ENCODE measurements at regions of chr5 and their contacts with region 1.

Region 1: DNA sequence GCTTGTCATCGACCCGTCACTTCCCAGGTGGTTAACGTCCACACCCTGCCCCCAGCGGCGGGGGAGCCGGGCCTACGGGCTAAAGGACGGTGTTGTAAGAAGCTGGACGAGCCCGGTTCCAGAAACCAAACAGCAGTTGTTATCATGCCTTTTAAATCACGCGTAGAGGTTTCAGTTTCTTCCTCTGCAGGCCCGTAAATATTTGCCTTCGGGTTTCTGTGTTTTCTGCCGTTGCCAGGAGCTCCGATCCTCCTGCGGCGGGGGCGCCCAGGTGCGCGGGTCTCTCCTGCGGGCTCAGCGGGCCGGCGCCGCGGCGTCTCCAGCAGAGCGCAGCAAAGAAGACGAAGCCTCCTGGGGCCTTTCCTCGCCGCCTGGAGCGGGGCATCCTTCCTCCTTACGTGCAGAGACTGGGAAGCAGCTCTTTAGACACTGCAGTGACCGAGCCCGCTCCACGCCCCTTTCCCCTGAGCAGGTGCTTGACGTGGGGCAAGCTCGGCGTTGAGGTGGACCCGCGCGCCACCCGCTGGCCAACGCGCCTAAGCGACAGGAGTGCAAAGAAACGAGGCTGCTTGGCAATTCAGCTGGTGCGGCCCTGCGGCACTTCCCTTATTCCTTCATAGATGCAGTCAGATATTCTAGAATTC is 21.8 kb upstream of the TTC1 start:
- DNase-seq: peak; percentile 57
- ATAC-seq: peak; percentile 98
- H3K4me3 ChIP-seq: peak overlapping the region; percentile 41 to 56
- H3K27ac ChIP-seq: no peak overlapping the region
- H3K4me1 ChIP-seq: peaks cover 0 to 19% of the 10 kb centered on the region in 2 experiments; a peak in 2 of 4 replicates
- H3K27me3 ChIP-seq: peaks cover 14% of the 10 kb centered on the region; the same call in 1 of the 2 replicates
- CTCF ChIP-seq: peak; percentile 85 to 87 (median 85)
- POLR2A ChIP-seq: no peak
- RAD21 ChIP-seq: peak; percentile 98

Region 2: GRCh38 chr5:158695595-158696330 is 1291.4 kb before region 1 on chr5:
- CTCF ChIA-PET with region 1: no interaction called
- POLR2A ChIA-PET with region 1: no interaction called
- RAD21 ChIA-PET with region 1: no interaction called
- intact Hi-C with region 1: loop called (anchors 5 kb)
- DNase-seq: peak; percentile 45
- ATAC-seq: peak; percentile 95
- H3K4me3 ChIP-seq: no peak overlapping the region
- H3K27ac ChIP-seq: no peak overlapping the region
- H3K4me1 ChIP-seq: no peaks in the 10 kb centered on the region
- H3K27me3 ChIP-seq: peaks cover 41% of the 10 kb centered on the region; the same call in 1 of the 2 replicates
- CTCF ChIP-seq: peak; percentile 62 to 97 (median 94)
- POLR2A ChIP-seq: no peak
- RAD21 ChIP-seq: peak; percentile 85

Region 3: DNA sequence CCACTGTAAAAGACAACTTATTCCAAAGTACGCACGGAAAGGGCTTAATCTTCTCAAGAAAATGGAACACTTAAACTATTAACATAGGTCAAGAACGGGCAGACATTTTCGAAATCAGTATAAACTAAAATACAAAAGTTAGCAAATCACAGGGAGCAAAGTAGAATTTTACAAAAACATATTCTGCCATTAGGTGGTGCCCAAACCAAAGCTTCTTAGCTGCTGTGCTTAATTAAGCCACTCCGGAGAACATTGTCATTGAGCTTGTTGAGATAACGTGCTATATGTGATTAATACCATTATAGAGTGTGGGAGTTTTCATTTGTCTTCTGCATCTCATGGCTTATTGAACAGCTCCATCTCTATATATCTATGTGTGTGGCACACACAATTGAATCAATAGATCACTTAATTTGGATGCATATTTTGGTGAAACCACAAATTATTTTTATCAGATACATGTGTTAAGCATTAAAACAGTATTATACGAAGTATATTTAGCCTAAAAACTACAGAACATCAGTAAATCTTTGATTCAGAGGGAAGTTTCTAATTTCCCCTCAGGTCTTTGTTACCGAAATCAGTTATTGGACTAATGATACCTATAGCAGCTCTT is 700.6 kb before region 1 on chr5:
- CTCF ChIA-PET with region 1: interaction called, 11 read pairs
- POLR2A ChIA-PET with region 1: no interaction called
- RAD21 ChIA-PET with region 1: interaction called, 3 to 7 read pairs
- intact Hi-C with region 1: loop called (anchors 5 kb)
- DNase-seq: no peak
- ATAC-seq: peak; percentile 50; the same call in 1 of the 2 replicates
- H3K4me3 ChIP-seq: no peak overlapping the region
- H3K27ac ChIP-seq: no peak overlapping the region
- H3K4me1 ChIP-seq: no peaks in the 10 kb centered on the region
- H3K27me3 ChIP-seq: no peaks in the 10 kb centered on the region
- CTCF ChIP-seq: peak; percentile 35 to 56 (median 46); a peak in 4 of 6 replicates
- POLR2A ChIP-seq: no peak
- RAD21 ChIP-seq: peak; percentile 75

Region 4: DNA sequence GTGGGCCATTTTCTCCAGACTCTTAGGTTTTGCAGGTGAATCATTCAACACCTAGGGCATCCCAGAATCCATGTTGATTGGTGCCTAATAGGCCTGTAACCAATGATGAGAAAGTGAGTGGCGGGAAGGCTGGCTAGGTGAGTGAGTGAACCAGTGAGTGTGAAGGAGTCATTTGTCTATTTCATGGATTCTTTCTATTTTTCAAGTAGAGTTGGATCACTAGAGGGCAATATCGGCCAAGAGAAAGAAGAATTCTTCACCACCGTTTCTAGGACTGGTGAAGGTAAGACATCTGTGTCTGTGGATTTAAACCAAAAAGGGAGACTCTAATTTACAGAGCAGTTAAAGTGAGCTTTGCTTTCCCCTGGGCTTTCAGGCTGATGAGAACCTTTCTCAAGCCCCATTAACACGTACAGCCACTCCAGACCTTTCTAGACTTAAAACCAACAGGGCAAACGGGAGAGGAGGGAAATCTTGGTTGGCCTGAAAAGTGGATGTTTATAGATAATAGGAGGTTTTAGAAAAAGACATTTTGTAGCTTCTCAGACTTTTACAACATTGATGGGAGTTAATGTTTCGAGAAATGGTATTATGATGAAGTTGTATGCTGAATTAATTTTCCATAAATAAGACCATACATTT is 542.6 kb before region 1 on chr5:
- CTCF ChIA-PET with region 1: interaction called, 57 read pairs
- POLR2A ChIA-PET with region 1: no interaction called
- RAD21 ChIA-PET with region 1: interaction called in 1 of 2 experiments, 4 read pairs
- intact Hi-C with region 1: loop called (anchors 1 kb)
- DNase-seq: peak; percentile 29
- ATAC-seq: peak; percentile 77
- H3K4me3 ChIP-seq: no peak overlapping the region
- H3K27ac ChIP-seq: no peak overlapping the region
- H3K4me1 ChIP-seq: peaks cover 4 to 10% of the 10 kb centered on the region in 2 experiments; a peak in 3 of 4 replicates
- H3K27me3 ChIP-seq: no peaks in the 10 kb centered on the region
- CTCF ChIP-seq: peak; percentile 26 to 76 (median 60); a peak in 3 of 6 replicates
- POLR2A ChIP-seq: no peak
- RAD21 ChIP-seq: peak; percentile 90

Region 5: DNA sequence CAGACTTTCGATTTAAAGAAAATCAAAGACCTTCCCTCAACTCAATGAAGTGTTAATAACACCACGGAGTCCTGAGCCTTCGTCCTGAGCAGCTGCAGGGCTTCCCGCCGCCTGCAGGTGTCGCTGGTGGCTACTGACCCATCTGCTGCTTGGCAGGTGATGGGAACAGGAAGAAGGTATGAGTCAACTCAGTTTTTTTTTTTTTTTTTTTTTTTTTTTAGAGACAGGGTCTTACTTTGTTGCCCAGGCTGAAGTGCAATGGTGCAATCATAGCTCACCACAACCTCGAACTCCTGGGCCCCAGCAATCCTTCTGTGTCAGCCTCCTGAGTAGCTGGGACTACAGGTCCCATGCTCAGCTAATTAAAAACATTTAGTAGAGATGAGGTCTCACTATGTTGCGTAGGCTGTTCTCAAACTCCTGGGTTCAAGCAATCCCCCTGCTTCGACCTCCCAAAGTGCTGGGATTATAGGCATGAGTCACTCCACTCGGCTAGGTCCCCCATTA is 471.2 kb before region 1 on chr5:
- CTCF ChIA-PET with region 1: interaction called, 22 read pairs
- POLR2A ChIA-PET with region 1: no interaction called
- RAD21 ChIA-PET with region 1: interaction called, 4 to 9 read pairs
- intact Hi-C with region 1: loop called (anchors 2 kb)
- DNase-seq: peak; percentile 44
- ATAC-seq: peak; percentile 94
- H3K4me3 ChIP-seq: no peak overlapping the region
- H3K27ac ChIP-seq: no peak overlapping the region
- H3K4me1 ChIP-seq: peaks cover 0 to 11% of the 10 kb centered on the region in 2 experiments; a peak in 2 of 4 replicates
- H3K27me3 ChIP-seq: no peaks in the 10 kb centered on the region
- CTCF ChIP-seq: peak; percentile 77 to 96 (median 95)
- POLR2A ChIP-seq: no peak
- RAD21 ChIP-seq: peak; percentile 91

Region 6: DNA sequence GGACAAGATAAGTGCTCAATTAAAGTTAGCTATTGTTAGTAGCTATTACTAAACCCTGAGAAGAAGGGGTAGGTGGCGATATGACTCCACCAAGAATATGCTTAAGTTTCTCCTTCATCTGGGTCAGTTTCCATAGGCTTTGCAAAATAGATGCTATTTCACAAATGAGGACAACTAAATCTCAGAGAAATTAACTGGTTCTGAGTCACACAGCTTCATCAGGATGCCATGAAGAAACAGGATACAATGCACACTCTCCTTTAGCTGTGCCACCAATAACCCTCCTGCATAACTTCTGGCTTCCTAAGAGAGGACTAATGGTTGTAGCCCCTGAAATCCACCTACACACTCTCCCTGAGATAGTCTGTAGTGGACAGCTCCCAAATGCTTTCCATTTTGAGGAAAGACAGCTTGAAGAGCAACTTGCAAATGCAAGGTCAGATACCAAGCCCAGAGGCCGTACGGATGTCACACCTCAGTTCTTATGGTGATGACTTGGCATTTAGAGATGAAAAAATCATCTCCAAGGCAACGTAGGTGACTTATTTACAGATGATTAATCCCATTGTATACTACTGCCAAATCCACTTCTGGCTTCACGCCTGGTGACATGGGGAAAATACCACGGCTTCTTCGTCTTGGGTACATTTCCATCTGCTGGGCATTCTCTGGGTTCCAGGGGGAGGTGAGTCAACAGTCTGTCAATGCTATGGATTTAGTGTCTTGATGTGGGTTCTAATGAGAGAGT is 405.5 kb before region 1 on chr5:
- CTCF ChIA-PET with region 1: interaction called, 14 read pairs
- POLR2A ChIA-PET with region 1: no interaction called
- RAD21 ChIA-PET with region 1: interaction called, 3 read pairs
- intact Hi-C with region 1: loop called (anchors 1 kb)
- DNase-seq: peak; percentile 94
- ATAC-seq: peak; percentile 68
- H3K4me3 ChIP-seq: no peak overlapping the region
- H3K27ac ChIP-seq: peak overlapping the region; percentile 49; the same call in 1 of the 2 replicates
- H3K4me1 ChIP-seq: peaks cover 28 to 40% of the 10 kb centered on the region in 2 experiments
- H3K27me3 ChIP-seq: no peaks in the 10 kb centered on the region
- CTCF ChIP-seq: peak in 2 of 3 experiments; percentile 23 to 39; a peak in 2 of 6 replicates
- POLR2A ChIP-seq: no peak
- RAD21 ChIP-seq: peak; percentile 54